CD4-positive, alpha-beta memory T cell (primary cell): ENCODE measurements at regions of chr7 and their contacts with region 1.

Region 1: DNA sequence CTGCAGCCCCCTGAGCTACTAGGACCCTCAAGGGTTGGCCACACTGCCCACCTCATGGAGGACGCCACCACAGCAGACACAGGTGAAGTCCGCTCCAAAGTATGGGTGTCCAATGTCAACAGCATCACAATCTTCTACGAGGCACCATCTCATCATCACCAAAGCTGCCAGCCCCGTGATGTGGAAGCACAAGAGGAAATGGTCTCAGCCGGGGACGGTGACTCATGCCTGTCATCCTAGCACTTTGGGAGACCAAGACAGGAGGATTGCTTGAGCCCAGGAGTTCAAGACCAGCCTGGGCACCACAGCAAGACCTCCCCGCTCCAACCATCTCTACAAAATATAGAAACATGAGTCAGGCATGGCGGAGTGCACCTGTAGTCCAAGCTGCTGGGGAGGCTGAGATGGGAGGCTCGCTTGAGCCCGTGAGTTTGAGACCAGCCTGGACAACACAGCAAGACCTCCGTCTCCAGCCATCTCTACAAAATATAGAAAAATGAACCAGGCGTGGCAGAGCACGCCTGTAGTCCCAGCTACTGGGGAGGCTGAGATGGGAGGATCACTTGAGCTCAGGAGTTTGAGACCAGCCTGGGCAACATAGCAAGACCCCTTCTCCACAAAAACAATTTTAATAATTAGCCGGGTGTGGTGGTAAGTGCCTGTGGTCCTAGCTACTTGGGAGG is 48.8 kb upstream of the MYL10 start:
- DNase-seq: no peak
- H3K4me3 ChIP-seq: no peak overlapping the region
- H3K4me3 Mint-ChIP-seq: no peak overlapping the region
- H3K27ac ChIP-seq: no peak overlapping the region
- H3K27ac Mint-ChIP-seq: no peak overlapping the region
- H3K4me1 ChIP-seq: no peaks in the 10 kb centered on the region
- H3K4me1 Mint-ChIP-seq: no peaks in the 10 kb centered on the region
- H3K27me3 ChIP-seq: no peaks in the 10 kb centered on the region
- H3K27me3 Mint-ChIP-seq: no peaks in the 10 kb centered on the region

Region 2: DNA sequence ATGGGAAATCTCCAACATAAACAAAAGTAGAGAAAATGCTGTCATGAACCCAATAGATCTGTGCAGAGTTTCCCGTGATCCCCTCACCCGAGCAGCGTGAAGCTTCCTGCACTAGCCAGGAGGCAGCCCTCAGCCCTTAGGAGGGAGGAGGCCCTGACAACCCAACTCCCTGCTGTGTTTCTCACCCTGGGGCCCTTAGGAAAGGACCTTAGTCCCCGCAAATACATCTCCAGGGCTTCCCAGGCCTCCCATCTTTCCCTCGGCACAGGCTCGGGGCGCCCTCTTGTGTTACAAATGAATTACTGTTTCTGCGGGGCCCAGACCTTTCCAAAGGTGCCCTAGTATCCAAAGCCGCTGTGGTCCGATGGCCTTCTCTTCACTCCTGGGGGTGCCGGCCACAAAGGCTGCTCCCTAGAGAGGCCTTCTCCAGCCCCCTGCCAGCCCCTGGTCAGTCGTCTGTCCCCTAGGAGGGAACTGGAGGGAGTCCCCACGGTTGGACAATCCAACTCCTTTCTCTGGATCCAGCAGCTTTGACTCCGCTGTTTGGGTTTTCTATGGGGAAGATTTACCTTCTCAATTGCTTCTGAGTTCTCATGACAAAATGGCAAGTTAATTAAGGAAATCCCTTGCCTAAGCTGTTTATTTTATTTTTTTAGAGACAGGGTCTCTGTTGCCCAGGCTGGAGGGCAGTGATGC is 558.8 kb after region 1 on chr7:
- CTCF ChIA-PET with region 1: interaction called, 7 read pairs
- POLR2A ChIA-PET with region 1: no interaction called
- intact Hi-C with region 1: loop called (anchors 2 kb)
- DNase-seq: peak in 4 of 5 donors; percentile 17 to 39 (median 29)
- H3K4me3 ChIP-seq: no peak overlapping the region
- H3K4me3 Mint-ChIP-seq: no peak overlapping the region
- H3K27ac ChIP-seq: no peak overlapping the region
- H3K27ac Mint-ChIP-seq: peak overlapping the region in 1 of 7 donors; percentile 60
- H3K4me1 ChIP-seq: no peaks in the 10 kb centered on the region
- H3K4me1 Mint-ChIP-seq: no peaks in the 10 kb centered on the region
- H3K27me3 ChIP-seq: no peaks in the 10 kb centered on the region
- H3K27me3 Mint-ChIP-seq: no peaks in the 10 kb centered on the region